ENCODE measurements at regions of chr21 and their contacts with region 1.

Region 1: DNA sequence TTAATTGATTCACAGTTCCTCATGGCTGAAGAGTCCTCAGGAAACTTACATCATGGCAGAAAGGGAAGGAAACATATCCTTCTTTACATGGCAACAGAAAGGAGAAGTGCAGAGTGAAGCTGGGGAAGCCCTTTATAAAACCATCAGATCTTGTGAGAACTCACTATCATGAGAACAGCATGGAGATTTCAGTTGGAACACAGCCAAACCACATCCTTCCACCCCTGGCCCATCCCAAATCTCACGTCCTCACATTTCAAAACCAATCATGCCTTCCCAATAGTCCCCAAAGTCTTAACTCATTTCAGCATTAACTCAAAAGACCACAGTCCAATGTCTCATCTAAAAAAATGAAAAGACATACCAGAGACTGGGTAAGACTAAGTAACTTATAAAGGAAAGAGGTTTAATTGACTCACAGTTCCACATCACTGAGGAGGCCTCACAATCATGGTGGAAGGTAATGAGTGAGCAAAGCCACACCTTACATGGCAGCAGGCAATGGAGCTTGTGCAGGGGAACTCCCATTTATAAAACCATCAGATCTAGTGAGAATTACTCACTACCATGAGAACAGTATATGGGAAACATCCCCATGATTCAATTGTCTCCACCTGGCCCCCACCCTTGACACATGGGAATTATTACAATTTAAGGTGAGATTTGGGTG is 105.2 kb downstream of the MRPL39 start:
- DNase-seq: peak; percentile 84
- H3K4me3 Mint-ChIP-seq: peak overlapping the region; percentile 39
- H3K27ac Mint-ChIP-seq: peak overlapping the region; percentile 87
- H3K4me1 Mint-ChIP-seq: peaks cover 57% of the 10 kb centered on the region
- H3K27me3 Mint-ChIP-seq: no peaks in the 10 kb centered on the region

Region 2: GRCh38 chr21:25421327-25422028 is 80.7 kb before region 1 on chr21:
- CTCF ChIA-PET with region 1: interaction called, 3 read pairs
- POLR2A ChIA-PET with region 1: interaction called, 4 read pairs
- intact Hi-C with region 1: loop called (anchors 1 kb)
- DNase-seq: peak; percentile 79
- H3K4me3 Mint-ChIP-seq: peak overlapping the region; percentile 67
- H3K27ac Mint-ChIP-seq: peak overlapping the region; percentile 89
- H3K4me1 Mint-ChIP-seq: peaks cover 62% of the 10 kb centered on the region
- H3K27me3 Mint-ChIP-seq: no peaks in the 10 kb centered on the region

Region 3: GRCh38 chr21:25428537-25428936 is 73.6 kb before region 1 on chr21:
- CTCF ChIA-PET with region 1: no interaction called
- POLR2A ChIA-PET with region 1: interaction called, 4 read pairs
- intact Hi-C with region 1: loop called (anchors 1 kb)
- DNase-seq: no peak
- H3K4me3 Mint-ChIP-seq: no peak overlapping the region
- H3K27ac Mint-ChIP-seq: peak overlapping the region; percentile 13
- H3K4me1 Mint-ChIP-seq: peaks cover 51% of the 10 kb centered on the region
- H3K27me3 Mint-ChIP-seq: no peaks in the 10 kb centered on the region

Region 4: DNA sequence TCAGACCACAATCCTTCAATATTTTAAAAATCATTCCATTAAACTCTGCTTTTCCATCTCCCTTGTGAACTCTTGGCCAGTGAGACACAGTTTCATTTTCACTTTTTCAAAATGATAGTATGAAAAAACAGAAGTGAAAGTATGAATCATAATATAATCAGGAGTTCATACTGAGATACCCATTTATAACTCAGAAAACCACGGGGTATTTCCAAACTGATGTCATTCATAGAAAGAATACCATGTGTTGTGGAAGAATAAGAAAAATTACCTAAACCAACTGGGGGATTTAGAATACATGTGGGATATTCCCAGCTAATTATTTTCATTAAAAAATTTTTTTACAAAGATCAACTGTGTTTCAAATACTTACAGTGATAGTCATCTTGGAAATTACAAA is 44.7 kb before region 1 on chr21:
- CTCF ChIA-PET with region 1: no interaction called
- POLR2A ChIA-PET with region 1: interaction called, 28 read pairs
- intact Hi-C with region 1: loop called (anchors 1 kb)
- DNase-seq: no peak
- H3K4me3 Mint-ChIP-seq: peak overlapping the region; percentile 68
- H3K27ac Mint-ChIP-seq: peak overlapping the region; percentile 93
- H3K4me1 Mint-ChIP-seq: peaks cover 77% of the 10 kb centered on the region
- H3K27me3 Mint-ChIP-seq: no peaks in the 10 kb centered on the region

Region 5: GRCh38 chr21:25464275-25464674 is 37.9 kb before region 1 on chr21:
- CTCF ChIA-PET with region 1: no interaction called
- POLR2A ChIA-PET with region 1: interaction called, 7 read pairs
- intact Hi-C with region 1: loop called (anchors 1 kb)
- DNase-seq: peak; percentile 38
- H3K4me3 Mint-ChIP-seq: peak overlapping the region; percentile 50
- H3K27ac Mint-ChIP-seq: peak overlapping the region; percentile 94
- H3K4me1 Mint-ChIP-seq: peaks cover 77% of the 10 kb centered on the region
- H3K27me3 Mint-ChIP-seq: no peaks in the 10 kb centered on the region

Region 6: GRCh38 chr21:25568246-25568645 is 66.1 kb after region 1 on chr21:
- CTCF ChIA-PET with region 1: no interaction called
- POLR2A ChIA-PET with region 1: interaction called, 117 read pairs
- intact Hi-C with region 1: loop called (anchors 1 kb)
- DNase-seq: no peak
- H3K4me3 Mint-ChIP-seq: peak overlapping the region; percentile 80
- H3K27ac Mint-ChIP-seq: peak overlapping the region; percentile 94
- H3K4me1 Mint-ChIP-seq: peaks cover 66% of the 10 kb centered on the region
- H3K27me3 Mint-ChIP-seq: no peaks in the 10 kb centered on the region

Region 7: GRCh38 chr21:25607151-25608043 is 105.3 kb after region 1 on chr21 and contains the start of gene MRPL39:
- CTCF ChIA-PET with region 1: no interaction called
- POLR2A ChIA-PET with region 1: no interaction called
- intact Hi-C with region 1: no loop called
- DNase-seq: peak; percentile 93
- H3K4me3 Mint-ChIP-seq: peak within 1 kb of the TSS; percentile 97
- H3K27ac Mint-ChIP-seq: peak within 1 kb of the TSS; percentile 91
- H3K4me1 Mint-ChIP-seq: peaks cover 41% of the 10 kb centered on the region
- H3K27me3 Mint-ChIP-seq: no peaks in the 10 kb centered on the region
- total RNA-seq, gene MRPL39: 71.7 to 73.6 TPM

Measured in activated CD4-positive, alpha-beta memory T cell treated with anti-CD3 and anti-CD28 coated beads for 36 hours (primary cell).